Mammary epithelial cell (primary cell): ENCODE measurements at regions of chr16 and their contacts with region 1.

Region 1: GRCh38 chr16:87966685-87967185 is 15.5 kb downstream of the BANP start:
- DNase-seq: peak; percentile 24
- H3K4me3 ChIP-seq: peak overlapping the region in 1 of 3 experiments; percentile 40
- H3K27ac ChIP-seq: peak overlapping the region; percentile 23
- H3K4me1 ChIP-seq: peaks cover 18% of the 10 kb centered on the region
- H3K27me3 ChIP-seq: no peaks in the 10 kb centered on the region
- CTCF ChIP-seq: no peak

Region 2: DNA sequence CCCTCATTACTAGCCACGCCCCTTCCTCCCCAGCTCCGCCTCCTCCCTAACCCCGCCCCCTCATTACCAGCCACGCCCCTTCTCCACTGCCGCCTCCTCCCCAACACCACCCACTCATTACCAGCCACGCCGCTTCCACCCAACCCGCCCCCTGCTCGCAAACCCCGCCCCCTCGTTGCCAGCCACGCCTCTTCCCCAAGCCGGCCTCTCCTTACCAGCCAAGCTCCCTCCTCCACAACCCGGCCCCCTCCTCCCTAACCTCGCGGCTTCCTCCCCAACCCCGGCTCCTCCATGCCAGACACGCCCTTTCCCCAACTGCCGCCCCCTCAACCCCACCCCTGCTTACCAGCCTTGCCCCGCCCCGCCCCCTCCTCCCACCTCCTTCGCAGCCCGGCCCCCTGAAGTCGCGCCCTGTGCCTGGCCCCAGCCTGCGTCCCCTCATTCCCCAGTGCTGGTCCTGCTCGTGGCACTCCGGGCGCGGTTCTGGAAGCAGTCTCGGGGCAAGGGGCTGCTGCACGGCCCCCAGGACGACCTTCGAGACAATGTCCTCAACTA is 1226.4 kb after region 1 on chr16:
- CTCF ChIA-PET with region 1: interaction called, 23 read pairs
- dilution Hi-C with region 1: no loop called
- in situ Hi-C with region 1: no loop called
- intact Hi-C with region 1: no loop called
- DNase-seq: no peak
- H3K4me3 ChIP-seq: no peak overlapping the region
- H3K27ac ChIP-seq: no peak overlapping the region
- H3K4me1 ChIP-seq: no peaks in the 10 kb centered on the region
- H3K27me3 ChIP-seq: peaks cover 2% of the 10 kb centered on the region
- CTCF ChIP-seq: no peak